ENCODE measurements at regions of chr3 and their contacts with region 1.

Region 1: GRCh38 chr3:28348629-28349483 is at the starts of genes AZI2 and ZCWPW2:
- DNase-seq: peak; percentile 95
- ATAC-seq: peak; percentile 87
- H3K4me3 Mint-ChIP-seq: peak within 1 kb of the TSS; percentile 97
- H3K27ac Mint-ChIP-seq: peak within 1 kb of the TSS; percentile 97
- H3K4me1 Mint-ChIP-seq: peaks cover 43% of the 10 kb centered on the region
- H3K27me3 Mint-ChIP-seq: no peaks in the 10 kb centered on the region
- total RNA-seq, gene AZI2: 52.0 to 55.3 TPM
- total RNA-seq, gene ZCWPW2: 0.31 to 0.42 TPM

Region 2: DNA sequence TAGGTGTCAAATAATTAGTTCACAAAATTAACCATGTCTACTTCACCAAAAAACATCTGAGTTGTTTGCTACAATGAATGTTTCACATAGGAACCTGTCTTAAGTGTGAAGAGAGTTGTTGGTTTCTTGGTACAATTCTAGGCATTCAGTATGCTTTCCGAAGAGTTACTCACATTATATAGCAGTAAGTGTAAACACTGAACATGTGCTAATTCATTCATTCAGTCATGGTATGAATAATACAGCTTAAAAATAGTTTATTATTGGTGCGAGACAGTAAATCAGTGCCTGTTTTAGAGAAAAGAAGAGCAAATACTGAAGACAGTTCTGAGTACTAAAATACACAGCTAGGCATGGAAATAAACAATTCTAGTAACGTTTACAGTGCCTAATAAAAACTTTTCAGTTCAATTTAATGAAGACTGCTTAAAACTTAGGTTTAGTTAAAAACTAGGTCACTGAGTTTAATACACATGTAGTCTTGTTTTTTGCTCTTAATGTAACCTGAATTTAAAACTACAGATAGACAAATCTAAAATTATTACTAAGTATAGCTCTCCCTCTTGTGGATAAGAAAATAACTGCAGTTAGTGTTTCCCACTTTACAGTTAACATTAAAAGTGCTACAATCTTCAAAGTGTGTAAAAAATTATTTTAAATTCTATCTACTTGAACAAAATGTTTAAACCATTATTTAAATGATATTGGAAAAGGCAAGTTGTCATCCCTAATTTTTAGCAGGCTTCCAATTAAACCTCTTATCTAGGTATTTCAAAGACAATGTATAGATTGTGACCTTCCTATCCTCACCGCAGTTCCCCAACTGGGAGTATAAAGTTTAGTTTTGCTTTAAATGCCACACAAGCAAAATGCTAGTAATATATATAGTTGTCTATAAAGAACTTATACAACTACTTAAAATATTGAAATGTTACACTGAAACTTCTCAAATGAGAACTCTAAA is 20.4 kb before region 1 on chr3:
- CTCF ChIA-PET with region 1: interaction called, 5 read pairs
- POLR2A ChIA-PET with region 1: interaction called, 23 read pairs
- DNase-seq: no peak
- ATAC-seq: no peak
- H3K4me3 Mint-ChIP-seq: no peak overlapping the region
- H3K27ac Mint-ChIP-seq: no peak overlapping the region
- H3K4me1 Mint-ChIP-seq: peaks cover 33% of the 10 kb centered on the region
- H3K27me3 Mint-ChIP-seq: no peaks in the 10 kb centered on the region

Region 3: DNA sequence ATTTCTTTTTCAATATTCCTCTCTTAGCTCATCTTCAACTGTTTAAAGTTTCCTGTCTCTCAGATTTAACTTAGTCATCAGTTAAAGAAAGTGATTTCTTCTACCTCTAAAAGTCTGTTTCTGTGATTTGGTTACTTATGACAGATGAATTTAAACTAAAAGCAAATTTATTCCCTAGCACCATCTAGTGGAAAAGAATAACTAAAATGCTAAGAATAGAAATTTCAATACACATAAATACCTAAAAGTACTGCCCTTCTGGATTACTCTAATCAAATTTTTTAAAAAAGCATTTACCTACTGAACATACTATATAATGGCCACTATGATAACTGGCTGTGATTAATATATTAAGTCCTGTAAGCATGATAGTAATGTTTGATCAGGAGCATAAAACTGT is 14.3 kb before region 1 on chr3:
- CTCF ChIA-PET with region 1: interaction called, 12 read pairs
- POLR2A ChIA-PET with region 1: interaction called, 17 read pairs
- DNase-seq: no peak
- ATAC-seq: no peak
- H3K4me3 Mint-ChIP-seq: no peak overlapping the region
- H3K27ac Mint-ChIP-seq: no peak overlapping the region
- H3K4me1 Mint-ChIP-seq: peaks cover 14% of the 10 kb centered on the region
- H3K27me3 Mint-ChIP-seq: no peaks in the 10 kb centered on the region

Region 4: GRCh38 chr3:28376424-28376823 is 27.6 kb after region 1 on chr3:
- CTCF ChIA-PET with region 1: no interaction called
- POLR2A ChIA-PET with region 1: no interaction called
- DNase-seq: no peak
- ATAC-seq: no peak
- H3K4me3 Mint-ChIP-seq: no peak overlapping the region
- H3K27ac Mint-ChIP-seq: no peak overlapping the region
- H3K4me1 Mint-ChIP-seq: no peaks in the 10 kb centered on the region
- H3K27me3 Mint-ChIP-seq: no peaks in the 10 kb centered on the region